Right ventricle myocardium superior (tissue), 1 donor: ENCODE measurements at regions of chr1 and their contacts with region 1.

Region 1: GRCh38 chr1:183090391-183091006 is 67.3 kb downstream of the LAMC1 start:
- DNase-seq: peak; percentile 74
- ATAC-seq: peak; percentile 87

Region 2: GRCh38 chr1:183023601-183024316 is 66.7 kb before region 1 on chr1:
- intact Hi-C with region 1: loop called (anchors 10 kb)
- DNase-seq: peak; percentile 72
- ATAC-seq: peak; percentile 31

Region 3: GRCh38 chr1:183148599-183148998 is 58.1 kb after region 1 on chr1:
- intact Hi-C with region 1: no loop called
- DNase-seq: no peak
- ATAC-seq: peak; percentile 61